CD4-positive, alpha-beta T cell (primary cell): ENCODE measurements at regions of chr5 and their contacts with region 1.

Region 1: DNA sequence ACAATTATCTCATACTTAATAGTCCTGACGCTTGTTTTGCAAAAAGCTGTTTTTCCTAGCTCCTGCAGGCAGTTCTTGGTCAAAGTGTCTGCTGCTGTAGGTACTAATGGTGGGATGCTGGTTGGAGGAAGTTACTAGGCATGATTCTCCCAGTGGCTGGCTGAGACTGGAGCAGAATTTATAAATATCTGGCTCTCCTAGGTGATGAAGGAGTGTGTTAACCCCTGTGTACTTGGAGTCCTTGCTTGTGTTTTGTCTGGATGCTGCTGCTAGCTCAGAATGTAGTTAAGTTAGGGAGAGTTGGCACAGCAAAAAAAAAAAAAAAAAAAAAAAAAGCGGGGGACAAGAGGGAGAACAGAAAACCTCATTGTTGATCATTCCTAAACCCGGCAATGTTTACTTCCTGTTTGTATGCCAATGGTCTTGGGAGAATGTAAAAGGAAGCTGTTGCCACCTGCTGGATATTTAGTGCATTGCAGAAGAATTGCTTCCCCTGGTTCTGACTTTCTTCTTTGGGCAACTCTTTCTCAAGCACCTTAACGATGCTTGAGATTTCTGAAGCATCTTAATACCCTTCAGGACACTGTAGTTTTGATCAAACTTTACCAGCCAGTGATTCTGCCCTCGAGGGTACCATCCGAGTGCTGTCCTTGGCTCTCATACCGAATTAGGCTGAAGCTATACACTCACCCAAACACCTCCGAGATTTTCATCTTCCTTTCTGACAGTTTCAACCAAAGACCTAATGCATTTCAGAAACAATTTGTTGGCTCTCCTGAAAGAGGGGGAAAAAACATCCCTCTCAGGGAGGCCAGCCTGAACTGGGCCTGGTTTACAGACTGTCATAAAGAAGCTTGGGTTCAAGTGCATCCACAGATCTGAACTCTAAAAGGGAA is 71.7 kb upstream of the WWC1 start:
- DNase-seq: peak in 5 of 14 experiments; percentile 29 to 78 (median 65)
- ATAC-seq: peak; percentile 48
- H3K4me3 ChIP-seq: no peak overlapping the region
- H3K4me3 Mint-ChIP-seq: no peak overlapping the region
- H3K27ac ChIP-seq: no peak overlapping the region
- H3K27ac Mint-ChIP-seq: no peak overlapping the region
- H3K4me1 ChIP-seq: peaks cover 8% of the 10 kb centered on the region
- H3K4me1 Mint-ChIP-seq: peaks cover 6% of the 10 kb centered on the region
- H3K27me3 ChIP-seq: no peaks in the 10 kb centered on the region
- H3K27me3 Mint-ChIP-seq: no peaks in the 10 kb centered on the region
- CTCF ChIP-seq: peak; percentile 84

Region 2: DNA sequence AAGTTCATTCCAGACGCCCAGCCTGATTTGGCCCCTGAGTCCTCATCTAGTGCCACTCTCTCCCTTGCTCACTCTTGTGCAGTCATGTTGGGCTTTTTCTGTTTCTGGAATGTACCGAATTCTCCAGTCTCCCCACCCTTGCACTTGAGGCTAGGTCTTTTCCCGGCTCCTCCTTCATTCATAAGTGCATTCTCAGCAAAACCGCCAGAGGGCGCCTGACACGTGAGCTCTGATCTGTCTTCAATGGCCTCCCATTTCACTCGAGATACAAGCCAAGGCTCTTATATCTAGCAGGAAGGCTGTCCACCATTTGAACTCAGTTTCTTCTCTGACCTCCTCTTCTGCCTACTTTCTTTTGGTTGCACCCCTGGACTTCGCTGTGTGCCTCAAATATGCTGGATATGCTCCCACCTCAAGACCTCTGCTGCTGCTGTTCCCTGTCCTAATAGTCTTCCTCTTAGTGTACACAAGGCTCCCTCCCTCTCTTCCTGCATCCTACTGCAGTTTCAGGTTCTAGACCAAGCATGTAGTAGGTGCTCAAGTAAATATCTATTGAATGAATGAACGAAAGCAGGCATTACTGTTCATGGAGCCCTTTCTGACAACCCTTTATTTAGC is 496.4 kb before region 1 on chr5:
- CTCF ChIA-PET with region 1: interaction called, 5 read pairs
- POLR2A ChIA-PET with region 1: interaction called, 3 read pairs
- intact Hi-C with region 1: loop called in 1 of 2 experiments (anchors 1 kb)
- DNase-seq: peak; percentile 15 to 79 (median 42)
- ATAC-seq: peak; percentile 74
- H3K4me3 ChIP-seq: no peak overlapping the region
- H3K4me3 Mint-ChIP-seq: no peak overlapping the region
- H3K27ac ChIP-seq: no peak overlapping the region
- H3K27ac Mint-ChIP-seq: no peak overlapping the region
- H3K4me1 ChIP-seq: peaks cover 6% of the 10 kb centered on the region
- H3K4me1 Mint-ChIP-seq: no peaks in the 10 kb centered on the region
- H3K27me3 ChIP-seq: no peaks in the 10 kb centered on the region
- H3K27me3 Mint-ChIP-seq: peaks cover 15% of the 10 kb centered on the region
- CTCF ChIP-seq: peak; percentile 85

Region 3: DNA sequence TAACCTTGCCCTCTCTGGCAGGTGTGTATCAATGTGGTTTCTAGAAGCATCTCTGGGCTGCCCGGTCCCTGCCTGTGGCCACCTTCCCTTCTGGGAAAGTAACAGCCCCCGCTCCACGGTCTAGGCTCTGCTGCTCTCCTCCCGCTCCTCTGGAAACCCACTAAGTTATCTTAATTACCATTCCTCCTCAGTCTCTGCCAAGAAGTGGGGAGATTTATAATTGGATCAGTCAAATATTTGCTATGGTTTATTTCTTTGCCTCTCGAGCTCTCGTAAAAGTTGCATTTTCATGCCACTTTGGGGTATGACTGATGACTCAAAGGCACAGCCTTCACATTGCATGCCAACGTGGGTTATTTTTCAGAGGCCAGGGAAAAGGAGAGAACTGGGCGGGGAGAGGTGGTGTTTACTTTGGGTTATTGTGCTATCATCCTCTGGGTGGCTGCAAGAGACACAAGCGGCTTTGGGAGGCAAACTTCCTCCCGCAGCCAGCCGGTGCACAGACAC is 133.6 kb before region 1 on chr5:
- CTCF ChIA-PET with region 1: no interaction called
- POLR2A ChIA-PET with region 1: no interaction called
- intact Hi-C with region 1: no loop called
- DNase-seq: no peak
- ATAC-seq: no peak
- H3K4me3 ChIP-seq: no peak overlapping the region
- H3K4me3 Mint-ChIP-seq: no peak overlapping the region
- H3K27ac ChIP-seq: no peak overlapping the region
- H3K27ac Mint-ChIP-seq: no peak overlapping the region
- H3K4me1 ChIP-seq: no peaks in the 10 kb centered on the region
- H3K4me1 Mint-ChIP-seq: no peaks in the 10 kb centered on the region
- H3K27me3 ChIP-seq: no peaks in the 10 kb centered on the region
- H3K27me3 Mint-ChIP-seq: peaks cover 20% of the 10 kb centered on the region
- CTCF ChIP-seq: no peak

Region 4: GRCh38 chr5:168114444-168115017 is 105.2 kb before region 1 on chr5:
- CTCF ChIA-PET with region 1: interaction called, 4 read pairs
- POLR2A ChIA-PET with region 1: no interaction called
- intact Hi-C with region 1: loop called in 1 of 2 experiments (anchors 5 kb)
- DNase-seq: peak in 7 of 14 experiments; percentile 3 to 56 (median 17)
- ATAC-seq: no peak
- H3K4me3 ChIP-seq: no peak overlapping the region
- H3K4me3 Mint-ChIP-seq: no peak overlapping the region
- H3K27ac ChIP-seq: no peak overlapping the region
- H3K27ac Mint-ChIP-seq: no peak overlapping the region
- H3K4me1 ChIP-seq: no peaks in the 10 kb centered on the region
- H3K4me1 Mint-ChIP-seq: no peaks in the 10 kb centered on the region
- H3K27me3 ChIP-seq: peaks cover 0 to 2% of the 10 kb centered on the region in 2 experiments
- H3K27me3 Mint-ChIP-seq: peaks cover 11% of the 10 kb centered on the region
- CTCF ChIP-seq: peak; percentile 19

Region 5: GRCh38 chr5:168282120-168282519 is 62.4 kb after region 1 on chr5:
- CTCF ChIA-PET with region 1: no interaction called
- POLR2A ChIA-PET with region 1: no interaction called
- intact Hi-C with region 1: no loop called
- DNase-seq: no peak
- ATAC-seq: no peak
- H3K4me3 ChIP-seq: no peak overlapping the region
- H3K4me3 Mint-ChIP-seq: no peak overlapping the region
- H3K27ac ChIP-seq: no peak overlapping the region
- H3K27ac Mint-ChIP-seq: no peak overlapping the region
- H3K4me1 ChIP-seq: no peaks in the 10 kb centered on the region
- H3K4me1 Mint-ChIP-seq: no peaks in the 10 kb centered on the region
- H3K27me3 ChIP-seq: peaks cover 0 to under 1% of the 10 kb centered on the region in 2 experiments
- H3K27me3 Mint-ChIP-seq: peaks cover 16% of the 10 kb centered on the region
- CTCF ChIP-seq: no peak